Activated T-helper 2 cell treated with anti-CD3 and anti-CD28 coated beads, Interferon-gamma antibody, Interleukin-2, Interleukin-4, amounts not matched to agents 10 μg/mL and 5 μg/mL and 100 μg/mL, durations not matched to agents 14 hours and 24 hours and 36 hours (primary cell): ENCODE measurements at regions of chr2 and their contacts with region 1.

Region 1: DNA sequence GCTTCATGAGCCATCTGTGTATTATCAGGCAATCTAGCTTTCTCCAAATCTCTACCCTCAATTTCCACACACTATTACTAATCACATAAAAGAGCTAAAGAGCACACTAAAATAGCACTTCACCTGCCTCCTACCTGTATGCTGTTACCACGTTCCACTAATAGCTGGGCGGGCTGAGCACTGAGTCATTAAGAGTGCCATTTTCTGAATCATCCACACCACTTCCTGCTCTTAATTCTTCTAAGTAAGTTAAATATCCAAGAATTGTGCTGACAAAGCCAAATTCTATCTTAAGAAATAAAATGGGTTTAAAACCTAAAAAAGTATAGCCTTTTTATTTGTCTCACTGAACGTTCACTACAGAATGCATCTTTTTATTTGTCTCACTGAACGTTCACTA is 35.7 kb downstream of the NOL10 start:
- DNase-seq: peak; percentile 45
- H3K4me3 Mint-ChIP-seq: peak overlapping the region; percentile 52
- H3K27ac Mint-ChIP-seq: peak overlapping the region; percentile 68
- H3K4me1 Mint-ChIP-seq: peaks cover 49% of the 10 kb centered on the region
- H3K27me3 Mint-ChIP-seq: no peaks in the 10 kb centered on the region

Region 2: DNA sequence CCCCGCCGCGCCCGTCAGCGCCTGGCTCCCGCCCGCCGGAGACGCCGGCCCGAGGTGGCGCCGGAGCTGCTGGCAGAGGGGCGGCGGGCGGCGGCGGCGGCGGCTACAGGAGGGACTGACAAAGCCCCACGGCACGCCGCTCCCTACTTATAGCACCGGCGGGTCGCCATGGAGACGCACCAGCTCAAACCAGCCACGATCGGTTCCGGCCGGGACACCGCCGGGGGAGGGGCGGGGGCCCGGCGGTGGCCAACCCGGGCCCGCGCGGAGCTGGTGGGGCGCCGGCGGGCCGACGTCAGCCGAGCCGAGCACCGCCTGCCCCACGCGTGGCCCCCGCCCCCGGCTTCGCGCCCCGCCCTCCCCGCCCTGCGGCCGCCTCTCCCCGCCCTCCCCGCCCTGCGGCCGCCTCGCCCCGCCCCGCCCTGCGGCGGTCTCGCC is 205.8 kb before region 1 on chr2 and contains the start of gene ODC1:
- intact Hi-C with region 1: loop called (anchors 1 kb)
- DNase-seq: peak; percentile 91
- H3K4me3 Mint-ChIP-seq: peak within 1 kb of the TSS; percentile 94
- H3K27ac Mint-ChIP-seq: peak within 1 kb of the TSS; percentile 92
- H3K4me1 Mint-ChIP-seq: peaks cover 36% of the 10 kb centered on the region
- H3K27me3 Mint-ChIP-seq: no peaks in the 10 kb centered on the region
- total RNA-seq, gene ODC1: 161 and 164 TPM in 2 replicates

Region 3: DNA sequence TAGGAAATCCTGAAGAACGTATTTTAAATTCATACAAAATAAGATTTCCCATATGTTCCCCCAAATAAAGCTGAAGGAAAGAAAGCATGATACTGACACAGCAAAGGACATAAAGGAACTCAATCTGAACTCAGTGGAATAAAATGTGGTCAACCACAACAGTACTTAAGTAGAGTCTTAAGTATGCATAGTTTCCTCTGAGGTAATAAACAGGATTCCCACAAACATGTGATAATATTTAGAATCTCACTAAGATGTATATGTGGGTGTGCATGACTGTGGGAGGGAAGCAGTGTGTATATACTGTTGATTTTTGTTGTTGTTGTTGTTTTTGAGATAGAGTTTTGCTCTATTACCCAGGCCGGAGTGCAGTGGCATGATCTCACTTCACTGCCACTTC is 33.6 kb before region 1 on chr2:
- intact Hi-C with region 1: loop called (anchors 2 kb)
- DNase-seq: no peak
- H3K4me3 Mint-ChIP-seq: no peak overlapping the region
- H3K27ac Mint-ChIP-seq: no peak overlapping the region
- H3K4me1 Mint-ChIP-seq: peaks cover 44% of the 10 kb centered on the region
- H3K27me3 Mint-ChIP-seq: no peaks in the 10 kb centered on the region

Region 4: GRCh38 chr2:10668402-10669012 is 14.4 kb after region 1 on chr2:
- intact Hi-C with region 1: no loop called
- DNase-seq: no peak
- H3K4me3 Mint-ChIP-seq: no peak overlapping the region
- H3K27ac Mint-ChIP-seq: no peak overlapping the region
- H3K4me1 Mint-ChIP-seq: peaks cover 2% of the 10 kb centered on the region
- H3K27me3 Mint-ChIP-seq: no peaks in the 10 kb centered on the region